MCF 10A (cell line): ENCODE measurements at regions of chr18 and their contacts with region 1.

Region 1: DNA sequence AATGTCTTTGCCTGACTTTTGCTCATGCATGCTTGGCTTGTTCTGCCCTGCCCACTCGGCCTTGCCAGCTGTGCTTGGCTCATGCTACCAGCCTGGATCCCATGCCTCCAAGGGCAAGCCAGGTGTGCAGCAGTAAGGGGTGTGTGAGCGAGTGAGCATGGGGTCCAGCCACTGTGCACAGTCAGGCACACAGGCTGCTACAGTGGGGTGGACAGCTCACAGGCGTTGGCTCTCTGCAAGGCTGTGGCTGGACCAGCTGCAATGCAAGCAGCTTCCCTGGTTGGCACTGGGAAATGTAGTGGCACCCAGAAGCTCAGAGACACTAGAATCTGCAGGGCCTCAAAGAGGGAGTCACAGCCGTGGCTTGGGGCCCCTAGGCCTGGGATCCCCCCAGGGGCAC is 529.7 kb downstream of the DSC3 start:
- DNase-seq: no peak
- H3K4me3 Mint-ChIP-seq: no peak overlapping the region
- H3K27ac Mint-ChIP-seq: no peak overlapping the region
- H3K4me1 Mint-ChIP-seq: no peaks in the 10 kb centered on the region
- H3K27me3 Mint-ChIP-seq: no peaks in the 10 kb centered on the region
- CTCF ChIP-seq: no peak

Region 2: GRCh38 chr18:30457156-30457555 is 55.7 kb before region 1 on chr18:
- CTCF ChIA-PET with region 1: no interaction called
- POLR2A ChIA-PET with region 1: no interaction called
- intact Hi-C with region 1: loop called (anchors 10 kb)
- DNase-seq: peak; percentile 18
- H3K4me3 Mint-ChIP-seq: no peak overlapping the region
- H3K27ac Mint-ChIP-seq: no peak overlapping the region
- H3K4me1 Mint-ChIP-seq: no peaks in the 10 kb centered on the region
- H3K27me3 Mint-ChIP-seq: peaks cover 3% of the 10 kb centered on the region
- CTCF ChIP-seq: no peak